Activated T-helper 1 cell treated with anti-CD3 and anti-CD28 coated beads, Interleukin-12 subunit alpha, Interleukin-12 subunit beta, Interleukin-2, Interleukin-4 antibody, amounts not matched to agents 30 ng/mL and 10 ng/mL and 1 ng/mL, durations not matched to agents 14 hours and 24 hours and 36 hours (primary cell): ENCODE measurements at regions of chr15 and their contacts with region 1.

Region 1: GRCh38 chr15:64460206-64460734 is at the start of gene ZNF609:
- DNase-seq: peak; percentile 86
- H3K4me3 Mint-ChIP-seq: peak within 1 kb of the TSS; percentile 88
- H3K27ac Mint-ChIP-seq: peak within 1 kb of the TSS; percentile 86
- H3K4me1 Mint-ChIP-seq: peaks cover 70% of the 10 kb centered on the region
- H3K27me3 Mint-ChIP-seq: peaks cover 1% of the 10 kb centered on the region
- total RNA-seq, gene ZNF609: 65.4 and 73.8 TPM in 2 replicates

Region 2: GRCh38 chr15:63504247-63504978 is 955.9 kb before region 1 on chr15 and contains the start of gene USP3:
- intact Hi-C with region 1: loop called (anchors 10 kb)
- DNase-seq: peak; percentile 91
- H3K4me3 Mint-ChIP-seq: peak within 1 kb of the TSS; percentile 93
- H3K27ac Mint-ChIP-seq: peak within 1 kb of the TSS; percentile 93
- H3K4me1 Mint-ChIP-seq: peaks cover 83% of the 10 kb centered on the region
- H3K27me3 Mint-ChIP-seq: no peaks in the 10 kb centered on the region
- total RNA-seq, gene USP3: 46.9 and 58.9 TPM in 2 replicates

Region 3: GRCh38 chr15:64387562-64388168 is 72.6 kb before region 1 on chr15 and contains the start of gene TRIP4:
- intact Hi-C with region 1: loop called (anchors 1 kb)
- DNase-seq: peak; percentile 96
- H3K4me3 Mint-ChIP-seq: peak within 1 kb of the TSS; percentile 99
- H3K27ac Mint-ChIP-seq: peak within 1 kb of the TSS; percentile 89
- H3K4me1 Mint-ChIP-seq: peaks cover 17% of the 10 kb centered on the region
- H3K27me3 Mint-ChIP-seq: no peaks in the 10 kb centered on the region
- total RNA-seq, gene TRIP4: 17.5 and 21.7 TPM in 2 replicates

Region 4: GRCh38 chr15:64443747-64444621 is 16.3 kb before region 1 on chr15:
- intact Hi-C with region 1: loop called (anchors 1 kb)
- DNase-seq: no peak
- H3K4me3 Mint-ChIP-seq: peak overlapping the region; percentile 74
- H3K27ac Mint-ChIP-seq: peak overlapping the region; percentile 94
- H3K4me1 Mint-ChIP-seq: peaks cover 49% of the 10 kb centered on the region
- H3K27me3 Mint-ChIP-seq: no peaks in the 10 kb centered on the region

Region 5: GRCh38 chr15:64536244-64536836 is 76.1 kb after region 1 on chr15:
- intact Hi-C with region 1: loop called (anchors 1 kb)
- DNase-seq: no peak
- H3K4me3 Mint-ChIP-seq: peak overlapping the region; percentile 13
- H3K27ac Mint-ChIP-seq: peak overlapping the region; percentile 66
- H3K4me1 Mint-ChIP-seq: peaks cover 38% of the 10 kb centered on the region
- H3K27me3 Mint-ChIP-seq: no peaks in the 10 kb centered on the region

Region 6: DNA sequence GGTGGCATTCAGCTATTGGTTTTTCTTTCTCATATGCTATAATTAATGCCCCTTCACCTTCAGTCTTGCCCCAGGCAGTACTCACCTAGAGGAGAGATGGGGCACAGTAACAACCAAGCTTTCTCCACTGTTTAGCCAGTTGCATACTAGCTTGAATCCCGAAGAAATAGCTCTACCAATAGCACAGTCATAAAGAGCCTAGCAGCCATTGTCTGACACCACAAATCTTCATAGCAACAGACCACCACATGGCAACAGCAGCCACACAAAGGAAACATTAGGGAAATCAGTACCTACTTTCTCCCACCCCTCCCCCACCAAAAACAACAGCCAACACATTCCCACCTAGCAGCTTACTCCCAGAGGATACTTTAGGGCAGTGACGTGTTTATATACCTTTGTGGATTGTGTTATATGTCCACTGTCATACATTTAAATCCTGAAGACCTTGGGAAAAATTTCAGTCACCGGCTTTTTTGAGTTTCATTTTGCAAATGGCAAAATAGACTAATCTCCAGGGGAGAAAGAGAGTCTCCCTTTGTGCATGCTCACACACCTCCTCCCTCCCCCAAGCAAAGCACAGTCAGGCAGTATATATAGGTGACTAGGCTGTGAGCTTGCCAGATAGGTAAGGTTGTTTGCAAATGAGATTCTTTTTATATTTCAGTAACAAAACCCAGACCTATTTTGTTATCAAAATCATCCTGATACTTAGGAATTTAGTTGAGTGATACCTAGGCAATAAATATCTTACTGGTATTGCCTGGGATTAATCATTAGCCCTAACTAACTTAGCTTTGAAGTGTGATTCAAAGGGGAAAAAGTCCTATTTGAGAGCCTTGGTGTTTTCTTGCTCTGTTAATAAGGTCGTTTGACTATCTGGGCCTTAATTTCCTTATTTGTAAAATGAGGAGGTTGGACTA is 174.6 kb after region 1 on chr15:
- intact Hi-C with region 1: loop called (anchors 1 kb)
- DNase-seq: peak; percentile 41
- H3K4me3 Mint-ChIP-seq: peak overlapping the region; percentile 42
- H3K27ac Mint-ChIP-seq: peak overlapping the region; percentile 80
- H3K4me1 Mint-ChIP-seq: peaks cover 51% of the 10 kb centered on the region
- H3K27me3 Mint-ChIP-seq: no peaks in the 10 kb centered on the region